HEK293T (cell line): ENCODE measurements at regions of chr3 and their contacts with region 1.

Region 1: DNA sequence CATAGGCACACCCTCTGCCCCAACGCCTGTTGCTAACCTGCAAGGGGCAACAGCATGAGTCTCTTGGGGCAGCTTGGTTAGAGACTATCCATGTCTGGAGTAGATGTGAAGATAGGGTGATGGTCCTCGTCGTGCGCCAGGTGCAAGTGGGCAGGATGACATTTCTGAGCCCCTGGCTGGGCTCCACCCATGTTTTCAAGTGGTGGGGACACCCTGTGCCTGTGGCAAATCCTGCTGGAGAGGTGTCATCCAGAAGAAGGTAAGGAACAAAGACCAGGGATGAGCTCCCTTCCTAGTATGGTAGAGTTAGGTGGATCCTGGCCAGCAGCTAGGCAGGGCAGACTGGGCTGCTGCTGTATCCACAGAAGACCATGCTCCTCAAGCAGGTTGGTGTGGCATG is 152.6 kb downstream of the ABHD5 start:
- DNase-seq: no peak

Region 2: GRCh38 chr3:43855674-43856299 is 12.4 kb after region 1 on chr3:
- CTCF ChIA-PET with region 1: interaction called, 21 read pairs
- POLR2A ChIA-PET with region 1: no interaction called
- DNase-seq: peak; percentile 61